CD8-positive, alpha-beta memory T cell (primary cell): ENCODE measurements at regions of chr22 and their contacts with region 1.

Region 1: DNA sequence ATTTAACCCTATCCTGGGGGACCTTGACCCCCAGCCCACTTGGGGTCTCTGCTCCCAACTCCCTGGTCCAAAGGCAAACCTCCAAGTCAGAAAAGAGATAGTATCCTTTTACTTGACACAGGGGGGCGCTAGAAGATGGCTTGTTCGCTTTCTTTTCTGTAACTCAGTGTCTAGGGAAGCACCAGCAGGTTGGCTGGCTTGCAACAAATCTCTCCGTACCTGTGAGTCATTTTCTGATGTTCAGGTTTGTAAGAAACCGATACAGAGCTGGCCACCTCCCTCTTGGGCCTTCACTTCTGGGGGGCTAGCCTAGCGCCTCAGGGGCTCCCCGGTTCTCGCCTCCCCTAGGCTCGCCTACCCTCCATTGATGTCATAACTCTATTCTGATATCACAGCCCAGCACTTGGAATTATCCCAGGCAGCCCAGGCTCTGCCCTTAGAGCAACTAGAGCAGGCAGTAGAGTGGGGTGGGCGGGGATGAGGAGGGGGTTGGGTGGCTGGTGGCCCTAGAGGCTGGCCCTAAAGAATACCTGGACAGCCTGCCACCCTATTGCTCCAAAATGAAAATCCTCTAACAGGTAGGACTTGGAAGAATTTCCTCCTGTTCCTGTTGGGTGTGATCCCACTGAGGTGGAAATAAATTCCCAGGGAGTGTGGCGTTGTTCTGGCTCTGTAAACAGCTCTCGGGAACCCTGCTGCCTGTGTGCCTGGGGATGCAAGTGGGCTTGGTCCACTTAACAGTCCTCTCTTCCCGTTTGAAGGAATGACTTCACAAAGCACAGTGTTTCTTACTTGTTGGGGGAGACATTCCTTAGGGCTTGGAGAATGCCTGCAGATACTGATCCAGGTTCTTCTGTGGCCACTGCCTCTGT is 69.4 kb downstream of the OSBP2 start:
- DNase-seq: peak; percentile 15 to 57 (median 38)
- H3K4me3 ChIP-seq: no peak overlapping the region
- H3K4me3 Mint-ChIP-seq: no peak overlapping the region
- H3K27ac ChIP-seq: no peak overlapping the region
- H3K27ac Mint-ChIP-seq: peak overlapping the region in 1 of 8 donors; percentile 70
- H3K4me1 ChIP-seq: no peaks in the 10 kb centered on the region
- H3K4me1 Mint-ChIP-seq: no peaks in the 10 kb centered on the region
- H3K27me3 ChIP-seq: no peaks in the 10 kb centered on the region
- H3K27me3 Mint-ChIP-seq: no peaks in the 10 kb centered on the region

Region 2: GRCh38 chr22:30920407-30920806 is 156.4 kb after region 1 on chr22:
- CTCF ChIA-PET with region 1: interaction called, 10 read pairs
- POLR2A ChIA-PET with region 1: no interaction called
- DNase-seq: peak; percentile 66 to 87 (median 74)
- H3K4me3 ChIP-seq: peak overlapping the region; percentile 44
- H3K4me3 Mint-ChIP-seq: peak overlapping the region; percentile 12 to 76 (median 64)
- H3K27ac ChIP-seq: no peak overlapping the region
- H3K27ac Mint-ChIP-seq: peak overlapping the region in 7 of 8 donors; percentile 0 to 52 (median 10)
- H3K4me1 ChIP-seq: peaks cover 22% of the 10 kb centered on the region
- H3K4me1 Mint-ChIP-seq: peaks cover 12 to 31% (median 14%) of the 10 kb centered on the region in 3 donors
- H3K27me3 ChIP-seq: no peaks in the 10 kb centered on the region
- H3K27me3 Mint-ChIP-seq: no peaks in the 10 kb centered on the region

Region 3: DNA sequence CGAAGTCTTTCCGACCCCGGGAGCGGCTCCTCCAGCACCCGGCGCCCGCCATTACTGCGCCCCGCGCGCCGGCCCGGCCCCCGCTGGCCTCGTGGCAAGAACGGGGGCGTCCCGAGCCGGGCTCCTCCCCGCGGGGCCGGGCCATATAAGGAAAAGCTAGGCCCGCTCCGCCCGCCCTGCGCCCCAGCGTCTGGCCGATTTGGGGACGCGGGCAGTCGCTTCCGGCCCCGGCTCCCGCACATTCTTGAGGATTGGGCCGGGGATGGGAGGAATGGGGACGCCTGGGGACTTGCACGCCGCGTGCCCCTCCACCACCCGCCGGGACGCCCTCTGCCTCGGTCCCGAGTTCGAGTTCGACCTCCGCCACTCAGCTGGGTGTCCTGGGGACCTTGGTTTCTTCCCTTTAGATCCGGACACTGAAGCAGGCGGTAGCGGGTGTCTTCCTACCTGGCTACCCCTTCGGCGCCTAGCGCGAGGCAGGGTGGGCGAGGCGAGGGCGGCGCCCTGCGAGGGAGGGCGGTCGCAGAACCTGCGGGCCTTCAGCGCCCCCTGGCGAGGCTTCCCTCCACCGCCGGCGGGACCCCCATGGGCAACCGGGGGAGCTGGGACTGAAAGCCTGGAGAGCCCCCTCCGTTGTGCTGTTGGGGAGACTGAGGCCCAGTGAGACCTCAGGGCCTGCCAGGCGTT is 320.9 kb after region 1 on chr22:
- CTCF ChIA-PET with region 1: interaction called, 10 read pairs
- POLR2A ChIA-PET with region 1: no interaction called
- DNase-seq: peak; percentile 81 to 89 (median 84)
- H3K4me3 ChIP-seq: peak overlapping the region; percentile 69
- H3K4me3 Mint-ChIP-seq: peak overlapping the region; percentile 83 to 92 (median 86)
- H3K27ac ChIP-seq: peak overlapping the region; percentile 68
- H3K27ac Mint-ChIP-seq: peak overlapping the region; percentile 45 to 90 (median 78)
- H3K4me1 ChIP-seq: peaks cover 38% of the 10 kb centered on the region
- H3K4me1 Mint-ChIP-seq: peaks cover 29 to 42% (median 31%) of the 10 kb centered on the region in 3 donors
- H3K27me3 ChIP-seq: no peaks in the 10 kb centered on the region
- H3K27me3 Mint-ChIP-seq: no peaks in the 10 kb centered on the region